HepG2 (cell line): ENCODE measurements at regions of chr3 and their contacts with region 1.

Region 1: DNA sequence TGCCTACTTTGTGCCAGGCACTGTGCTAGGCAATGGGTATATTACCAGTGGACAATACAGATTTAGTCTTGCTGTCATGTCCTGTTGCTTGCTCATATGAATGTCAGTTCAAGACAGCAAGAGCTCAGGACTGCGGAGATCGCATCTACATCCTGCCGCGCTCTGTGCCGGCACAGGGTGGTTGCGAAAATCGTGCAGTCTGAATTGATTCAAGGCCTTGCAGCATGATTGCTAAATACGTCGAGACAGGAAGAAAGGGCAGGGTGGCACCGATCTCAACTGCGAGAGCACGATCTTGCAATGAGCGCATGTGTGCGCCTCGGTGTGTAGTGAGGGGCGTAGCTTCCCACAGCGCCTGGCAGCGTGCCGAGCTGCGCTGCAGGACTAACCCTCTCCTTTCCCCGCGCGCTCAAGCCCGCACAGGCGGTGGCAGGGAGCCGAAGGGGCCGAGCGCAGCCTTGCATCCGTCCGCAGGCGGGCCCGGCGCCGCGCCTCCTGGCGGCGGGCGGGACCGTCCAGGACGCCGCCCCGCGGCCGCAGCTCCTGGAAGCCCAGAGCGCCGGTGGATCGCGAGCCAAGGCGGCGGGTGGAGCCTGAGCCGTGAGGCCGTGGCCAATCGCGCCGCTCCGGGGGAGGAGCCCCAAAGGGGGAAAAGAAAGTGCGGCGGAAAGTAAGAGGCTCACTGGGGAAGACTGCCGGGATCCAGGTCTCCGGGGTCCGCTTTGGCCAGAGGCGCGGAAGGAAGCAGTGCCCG is at the start of gene IL1RAP:
- DNase-seq: peak; percentile 89
- ATAC-seq: peak; percentile 96
- H3K4me3 ChIP-seq: peak within 1 kb of the TSS; percentile 69 to 94 (median 88)
- H3K27ac ChIP-seq: peak within 1 kb of the TSS; percentile 75
- H3K4me1 ChIP-seq: peaks cover 52% of the 10 kb centered on the region
- H3K27me3 ChIP-seq: peaks cover 0 to 4% of the 10 kb centered on the region in 2 experiments; a peak in 1 of 5 replicates
- CTCF ChIP-seq: peak; percentile 76
- EP300 ChIP-seq: no peak; a peak in 1 of 4 replicates
- POLR2A ChIP-seq: peak; percentile 68 to 74; a peak in 3 of 4 replicates
- RAD21 ChIP-seq: peak; percentile 92
- total RNA-seq, gene IL1RAP: 11.6 and 18.3 TPM in 2 replicates

Region 2: DNA sequence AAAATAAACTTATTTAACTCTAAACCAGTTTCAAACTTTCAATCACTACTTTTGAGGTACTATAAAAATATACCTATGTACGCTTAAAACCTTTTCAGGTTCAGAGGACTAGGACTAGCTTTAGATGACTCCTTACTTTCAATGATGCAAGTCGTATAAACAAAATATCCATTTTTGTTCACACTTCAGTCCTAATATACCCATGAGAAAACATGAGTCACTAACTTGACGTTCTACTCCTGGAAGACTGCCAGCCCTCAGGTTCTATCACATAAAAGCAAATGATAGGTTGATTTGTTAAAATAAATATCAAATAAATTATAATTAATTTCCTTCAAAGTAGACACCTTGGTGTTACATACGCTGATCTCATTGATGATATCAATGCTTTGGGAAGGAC is 382.3 kb before region 1 on chr3:
- CTCF ChIA-PET with region 1: no interaction called
- POLR2A ChIA-PET with region 1: no interaction called
- in situ Hi-C with region 1: no loop called
- intact Hi-C with region 1: no loop called
- DNase-seq: no peak
- ATAC-seq: no peak
- H3K4me3 ChIP-seq: no peak overlapping the region
- H3K27ac ChIP-seq: no peak overlapping the region
- H3K4me1 ChIP-seq: no peaks in the 10 kb centered on the region
- H3K27me3 ChIP-seq: no peaks in the 10 kb centered on the region
- CTCF ChIP-seq: no peak
- EP300 ChIP-seq: no peak
- POLR2A ChIP-seq: no peak
- RAD21 ChIP-seq: no peak

Region 3: DNA sequence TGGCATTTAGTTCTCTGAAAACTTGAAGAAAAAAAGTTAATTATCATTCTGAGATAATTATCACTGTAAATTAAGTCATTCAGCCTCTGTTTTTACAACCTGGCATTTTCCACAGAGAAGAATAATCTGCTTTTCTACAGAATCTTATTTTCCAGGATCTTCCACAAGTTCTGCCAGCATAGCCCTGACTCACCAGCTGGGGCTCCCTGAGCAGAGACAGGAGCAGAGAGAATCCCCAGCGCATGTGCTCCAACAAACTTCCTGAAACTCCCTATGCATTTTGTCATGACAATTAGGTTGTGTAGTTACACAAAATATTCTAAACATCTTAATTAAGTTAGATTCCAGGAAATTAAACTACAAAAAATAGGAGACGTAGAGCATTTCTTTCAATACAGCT is 31.8 kb before region 1 on chr3:
- CTCF ChIA-PET with region 1: no interaction called
- POLR2A ChIA-PET with region 1: no interaction called
- in situ Hi-C with region 1: no loop called
- intact Hi-C with region 1: loop called (anchors 1 kb)
- DNase-seq: no peak
- ATAC-seq: no peak
- H3K4me3 ChIP-seq: no peak overlapping the region
- H3K27ac ChIP-seq: no peak overlapping the region
- H3K4me1 ChIP-seq: no peaks in the 10 kb centered on the region
- H3K27me3 ChIP-seq: no peaks in the 10 kb centered on the region
- CTCF ChIP-seq: no peak
- EP300 ChIP-seq: no peak
- POLR2A ChIP-seq: no peak
- RAD21 ChIP-seq: no peak

Region 4: GRCh38 chr3:190526787-190527762 is 13.5 kb after region 1 on chr3:
- CTCF ChIA-PET with region 1: no interaction called
- POLR2A ChIA-PET with region 1: interaction called, 23 read pairs
- in situ Hi-C with region 1: no loop called
- intact Hi-C with region 1: no loop called
- DNase-seq: peak; percentile 57
- ATAC-seq: peak; percentile 88
- H3K4me3 ChIP-seq: no peak overlapping the region; a peak in 1 of 6 replicates
- H3K27ac ChIP-seq: peak overlapping the region; percentile 57
- H3K4me1 ChIP-seq: peaks cover 69% of the 10 kb centered on the region
- H3K27me3 ChIP-seq: no peaks in the 10 kb centered on the region
- CTCF ChIP-seq: no peak
- EP300 ChIP-seq: peak in 1 of 2 experiments; percentile 52; a peak in 2 of 4 replicates
- POLR2A ChIP-seq: no peak
- RAD21 ChIP-seq: no peak

Region 5: GRCh38 chr3:190543671-190544070 is 30.1 kb after region 1 on chr3:
- CTCF ChIA-PET with region 1: no interaction called
- POLR2A ChIA-PET with region 1: interaction called, 4 read pairs
- in situ Hi-C with region 1: no loop called
- intact Hi-C with region 1: loop called (anchors 2 kb)
- DNase-seq: no peak
- ATAC-seq: no peak
- H3K4me3 ChIP-seq: no peak overlapping the region
- H3K27ac ChIP-seq: no peak overlapping the region
- H3K4me1 ChIP-seq: peaks cover 88% of the 10 kb centered on the region
- H3K27me3 ChIP-seq: no peaks in the 10 kb centered on the region
- CTCF ChIP-seq: no peak
- EP300 ChIP-seq: no peak
- POLR2A ChIP-seq: no peak
- RAD21 ChIP-seq: no peak

Region 6: GRCh38 chr3:190566043-190566933 is 52.7 kb after region 1 on chr3:
- CTCF ChIA-PET with region 1: no interaction called
- POLR2A ChIA-PET with region 1: no interaction called
- in situ Hi-C with region 1: no loop called
- intact Hi-C with region 1: loop called (anchors 2 kb)
- DNase-seq: peak; percentile 98
- ATAC-seq: peak; percentile 97
- H3K4me3 ChIP-seq: no peak overlapping the region; a peak in 1 of 6 replicates
- H3K27ac ChIP-seq: peak overlapping the region; percentile 75
- H3K4me1 ChIP-seq: peaks cover 37% of the 10 kb centered on the region
- H3K27me3 ChIP-seq: no peaks in the 10 kb centered on the region
- CTCF ChIP-seq: 0 out of 2 replicates have a peak, but pooled peaks have one; percentile 13
- EP300 ChIP-seq: peak; percentile 73 to 93
- POLR2A ChIP-seq: no peak
- RAD21 ChIP-seq: no peak

Region 7: GRCh38 chr3:190617185-190617584 is 103.6 kb after region 1 on chr3:
- CTCF ChIA-PET with region 1: no interaction called
- POLR2A ChIA-PET with region 1: interaction called, 6 read pairs
- in situ Hi-C with region 1: no loop called
- intact Hi-C with region 1: loop called (anchors 2 kb)
- DNase-seq: peak; percentile 92
- ATAC-seq: peak; percentile 84
- H3K4me3 ChIP-seq: no peak overlapping the region; a peak in 1 of 6 replicates
- H3K27ac ChIP-seq: peak overlapping the region; percentile 75
- H3K4me1 ChIP-seq: peaks cover 80% of the 10 kb centered on the region
- H3K27me3 ChIP-seq: no peaks in the 10 kb centered on the region
- CTCF ChIP-seq: no peak
- EP300 ChIP-seq: peak in 1 of 2 experiments; percentile 76; a peak in 3 of 4 replicates
- POLR2A ChIP-seq: no peak
- RAD21 ChIP-seq: no peak

Region 8: DNA sequence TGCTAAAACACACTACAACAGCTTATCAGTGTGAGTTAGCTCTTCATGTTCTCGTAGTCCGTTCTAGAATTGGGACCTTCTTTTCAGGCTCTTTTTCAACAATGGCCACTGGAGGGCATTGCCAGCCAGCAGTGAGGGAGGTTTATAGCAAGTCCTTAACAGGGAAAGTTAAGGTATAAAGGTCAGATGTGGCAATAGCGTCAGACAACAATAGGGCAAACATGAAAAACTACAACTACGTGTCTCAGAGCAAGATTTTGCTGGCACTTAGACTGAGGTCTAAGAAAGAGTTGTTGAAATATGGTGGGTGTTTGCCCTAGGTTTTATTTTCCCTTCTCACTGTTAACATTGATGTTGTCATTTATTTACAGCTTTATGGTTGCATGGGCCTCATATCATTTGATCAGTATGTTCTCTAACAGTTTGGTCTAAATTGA is 187.5 kb after region 1 on chr3:
- CTCF ChIA-PET with region 1: no interaction called
- POLR2A ChIA-PET with region 1: interaction called, 4 read pairs
- in situ Hi-C with region 1: loop called (anchors 10 kb)
- intact Hi-C with region 1: loop called (anchors 1 kb)
- DNase-seq: peak; percentile 91
- ATAC-seq: peak; percentile 99
- H3K4me3 ChIP-seq: no peak overlapping the region; a peak in 1 of 6 replicates
- H3K27ac ChIP-seq: no peak overlapping the region
- H3K4me1 ChIP-seq: peaks cover 23% of the 10 kb centered on the region
- H3K27me3 ChIP-seq: no peaks in the 10 kb centered on the region
- CTCF ChIP-seq: peak; percentile 91
- EP300 ChIP-seq: peak in 1 of 2 experiments; percentile 42; a peak in 1 of 4 replicates
- POLR2A ChIP-seq: no peak
- RAD21 ChIP-seq: peak; percentile 71